GM12878 (cell line): ENCODE measurements at regions of chr3 and their contacts with region 1.

Region 1: GRCh38 chr3:175356899-175357324 is 497.8 kb downstream of the NAALADL2 start:
- DNase-seq: no peak
- ATAC-seq: peak; percentile 64
- H3K4me3 ChIP-seq: no peak overlapping the region
- H3K27ac ChIP-seq: no peak overlapping the region
- H3K4me1 ChIP-seq: no peaks in the 10 kb centered on the region
- H3K27me3 ChIP-seq: no peaks in the 10 kb centered on the region
- CTCF ChIP-seq: no peak
- EP300 ChIP-seq: peak; percentile 41 to 79; a peak in 3 of 4 replicates
- POLR2A ChIP-seq: no peak
- RAD21 ChIP-seq: no peak

Region 2: GRCh38 chr3:175295248-175296052 is 61.5 kb before region 1 on chr3:
- CTCF ChIA-PET with region 1: no interaction called
- POLR2A ChIA-PET with region 1: interaction called, 3 read pairs
- RAD21 ChIA-PET with region 1: interaction called, 23 read pairs
- SMC1A ChIA-PET with region 1: interaction called, 7 read pairs
- in situ Hi-C with region 1: no loop called
- intact Hi-C with region 1: no loop called
- DNase-seq: no peak
- ATAC-seq: peak; percentile 27
- H3K4me3 ChIP-seq: no peak overlapping the region
- H3K27ac ChIP-seq: no peak overlapping the region
- H3K4me1 ChIP-seq: no peaks in the 10 kb centered on the region
- H3K27me3 ChIP-seq: no peaks in the 10 kb centered on the region
- CTCF ChIP-seq: no peak
- EP300 ChIP-seq: no peak
- POLR2A ChIP-seq: no peak
- RAD21 ChIP-seq: no peak

Region 3: DNA sequence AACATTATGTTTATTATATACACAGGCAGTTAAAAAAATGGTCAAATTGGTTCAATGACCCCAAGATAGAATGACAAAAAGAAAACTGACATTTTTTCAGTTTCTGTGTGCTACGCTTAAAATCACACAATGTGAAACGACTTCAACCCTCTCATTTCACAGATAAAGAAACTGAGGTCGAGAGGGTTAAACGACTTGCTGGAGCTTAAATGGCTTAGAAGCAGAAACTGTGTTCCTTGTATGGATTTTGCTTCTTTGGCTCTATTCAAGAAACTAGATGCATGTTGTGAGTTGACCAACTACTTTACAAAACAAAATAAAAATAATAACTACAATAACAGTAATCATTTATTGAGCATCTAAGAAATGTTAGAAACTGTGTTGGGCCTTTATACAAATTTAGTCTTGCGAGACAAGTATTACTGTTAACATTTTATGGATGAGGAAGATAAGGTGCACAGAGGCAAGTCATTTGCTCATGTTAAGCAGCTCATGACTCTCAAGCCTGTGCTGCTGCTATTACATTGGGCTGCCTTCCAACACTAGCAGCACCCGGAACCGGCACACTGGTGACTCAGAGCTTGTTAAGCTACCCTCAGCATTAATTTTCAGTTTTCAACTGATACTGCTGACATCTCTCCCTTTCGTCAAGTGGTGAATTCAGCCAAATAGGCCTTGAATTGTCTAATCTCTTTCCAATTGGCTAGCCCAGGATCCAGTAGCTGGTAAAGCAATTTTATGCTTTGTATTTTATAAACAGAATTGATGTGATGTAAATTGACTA is 10.1 kb before region 1 on chr3:
- CTCF ChIA-PET with region 1: interaction called, 10 read pairs
- POLR2A ChIA-PET with region 1: interaction called, 14 read pairs
- RAD21 ChIA-PET with region 1: interaction called, 52 read pairs
- SMC1A ChIA-PET with region 1: interaction called, 38 read pairs
- in situ Hi-C with region 1: no loop called
- intact Hi-C with region 1: no loop called
- DNase-seq: peak; percentile 16
- ATAC-seq: peak; percentile 90
- H3K4me3 ChIP-seq: no peak overlapping the region
- H3K27ac ChIP-seq: no peak overlapping the region
- H3K4me1 ChIP-seq: no peaks in the 10 kb centered on the region
- H3K27me3 ChIP-seq: no peaks in the 10 kb centered on the region
- CTCF ChIP-seq: no peak
- EP300 ChIP-seq: no peak
- POLR2A ChIP-seq: no peak
- RAD21 ChIP-seq: no peak

Region 4: DNA sequence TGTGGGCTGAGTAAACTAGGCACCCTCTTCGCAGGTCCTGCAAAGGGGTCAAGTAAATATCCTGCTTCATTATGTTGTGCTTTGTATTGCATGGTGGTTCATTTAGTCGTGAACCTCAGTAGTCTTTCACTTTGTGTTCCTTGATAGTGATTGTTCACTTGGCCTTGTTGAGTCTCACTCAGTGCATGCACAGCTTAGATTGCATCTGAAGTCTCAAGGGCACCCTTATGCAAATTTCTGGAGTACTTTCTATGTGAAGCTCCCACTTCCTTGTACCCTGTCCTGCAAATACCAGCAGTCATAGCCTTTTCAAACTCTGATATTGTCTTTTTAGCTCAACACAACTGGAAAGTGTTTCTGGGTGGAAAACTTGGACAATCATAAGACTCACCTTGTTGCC is 21.4 kb after region 1 on chr3:
- CTCF ChIA-PET with region 1: interaction called, 11 read pairs
- POLR2A ChIA-PET with region 1: interaction called, 9 read pairs
- RAD21 ChIA-PET with region 1: interaction called, 13 read pairs
- SMC1A ChIA-PET with region 1: interaction called, 13 read pairs
- in situ Hi-C with region 1: no loop called
- intact Hi-C with region 1: no loop called
- DNase-seq: peak; percentile 39
- ATAC-seq: peak; percentile 96
- H3K4me3 ChIP-seq: no peak overlapping the region
- H3K27ac ChIP-seq: no peak overlapping the region
- H3K4me1 ChIP-seq: no peaks in the 10 kb centered on the region
- H3K27me3 ChIP-seq: no peaks in the 10 kb centered on the region
- CTCF ChIP-seq: no peak
- EP300 ChIP-seq: no peak
- POLR2A ChIP-seq: no peak
- RAD21 ChIP-seq: no peak

Region 5: DNA sequence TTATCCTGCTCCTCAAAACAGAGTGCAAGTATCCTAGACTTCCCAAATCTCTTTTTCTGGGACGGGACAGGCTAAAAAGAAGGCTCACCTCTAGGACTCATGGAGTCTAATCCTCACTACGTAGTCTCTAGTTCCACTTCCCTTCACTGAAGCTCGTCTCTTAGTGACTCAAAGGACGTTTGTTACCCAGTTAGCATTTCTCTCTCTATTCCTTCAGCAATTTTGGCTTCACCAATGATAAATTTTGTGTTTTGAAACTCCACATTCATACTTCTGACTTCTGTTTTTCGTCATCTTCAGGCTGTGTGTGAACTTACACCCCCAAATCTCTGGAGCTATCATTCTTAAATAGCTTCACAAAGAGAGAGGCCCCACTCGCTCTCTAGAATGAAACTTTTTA is 129.3 kb after region 1 on chr3:
- CTCF ChIA-PET with region 1: interaction called, 4 read pairs
- POLR2A ChIA-PET with region 1: no interaction called
- RAD21 ChIA-PET with region 1: interaction called, 5 read pairs
- SMC1A ChIA-PET with region 1: interaction called, 12 read pairs
- in situ Hi-C with region 1: no loop called
- intact Hi-C with region 1: no loop called
- DNase-seq: peak; percentile 39
- ATAC-seq: peak; percentile 81
- H3K4me3 ChIP-seq: no peak overlapping the region
- H3K27ac ChIP-seq: no peak overlapping the region
- H3K4me1 ChIP-seq: peaks cover 5% of the 10 kb centered on the region; the same call in 1 of the 2 replicates
- H3K27me3 ChIP-seq: no peaks in the 10 kb centered on the region
- CTCF ChIP-seq: no peak
- EP300 ChIP-seq: peak; percentile 26 to 41; a peak in 1 of 4 replicates
- POLR2A ChIP-seq: no peak
- RAD21 ChIP-seq: peak; percentile 3; the same call in 1 of the 2 replicates

Region 6: GRCh38 chr3:176430244-176431037 is 1073.5 kb after region 1 on chr3:
- CTCF ChIA-PET with region 1: no interaction called
- POLR2A ChIA-PET with region 1: no interaction called
- RAD21 ChIA-PET with region 1: interaction called, 10 read pairs
- SMC1A ChIA-PET with region 1: interaction called, 4 read pairs
- in situ Hi-C with region 1: no loop called
- intact Hi-C with region 1: no loop called
- DNase-seq: no peak
- ATAC-seq: 0 out of 3 replicates have a peak, but pooled peaks have one; percentile 48
- H3K4me3 ChIP-seq: no peak overlapping the region
- H3K27ac ChIP-seq: no peak overlapping the region
- H3K4me1 ChIP-seq: no peaks in the 10 kb centered on the region
- H3K27me3 ChIP-seq: no peaks in the 10 kb centered on the region
- CTCF ChIP-seq: peak; percentile 29 to 49 (median 31); a peak in 4 of 6 replicates
- EP300 ChIP-seq: no peak
- POLR2A ChIP-seq: no peak
- RAD21 ChIP-seq: peak; percentile 65